ENCODE measurements at regions of chr7 and their contacts with region 1.

Region 1: GRCh38 chr7:135238112-135238744 is 4.6 kb downstream of the STRA8 start:
- DNase-seq: no peak
- ATAC-seq: peak; percentile 30; the same call in 2 of the 3 replicates
- H3K4me3 ChIP-seq: no peak overlapping the region
- H3K27ac ChIP-seq: no peak overlapping the region
- H3K4me1 ChIP-seq: peaks cover 14% of the 10 kb centered on the region
- H3K27me3 ChIP-seq: no peaks in the 10 kb centered on the region
- CTCF ChIP-seq: peak in 2 of 3 experiments; percentile 49 to 56; a peak in 4 of 6 replicates
- EP300 ChIP-seq: no peak
- POLR2A ChIP-seq: no peak
- RAD21 ChIP-seq: no peak

Region 2: GRCh38 chr7:134789967-134790685 is 448.1 kb before region 1 on chr7:
- CTCF ChIA-PET with region 1: no interaction called
- POLR2A ChIA-PET with region 1: no interaction called
- RAD21 ChIA-PET with region 1: no interaction called
- SMC1A ChIA-PET with region 1: no interaction called
- in situ Hi-C with region 1: no loop called
- intact Hi-C with region 1: no loop called
- DNase-seq: no peak
- ATAC-seq: peak; percentile 52; the same call in 2 of the 3 replicates
- H3K4me3 ChIP-seq: no peak overlapping the region
- H3K27ac ChIP-seq: no peak overlapping the region
- H3K4me1 ChIP-seq: no peaks in the 10 kb centered on the region
- H3K27me3 ChIP-seq: no peaks in the 10 kb centered on the region; a peak in 1 of 4 replicates
- CTCF ChIP-seq: no peak
- EP300 ChIP-seq: no peak
- POLR2A ChIP-seq: no peak
- RAD21 ChIP-seq: no peak

Region 3: DNA sequence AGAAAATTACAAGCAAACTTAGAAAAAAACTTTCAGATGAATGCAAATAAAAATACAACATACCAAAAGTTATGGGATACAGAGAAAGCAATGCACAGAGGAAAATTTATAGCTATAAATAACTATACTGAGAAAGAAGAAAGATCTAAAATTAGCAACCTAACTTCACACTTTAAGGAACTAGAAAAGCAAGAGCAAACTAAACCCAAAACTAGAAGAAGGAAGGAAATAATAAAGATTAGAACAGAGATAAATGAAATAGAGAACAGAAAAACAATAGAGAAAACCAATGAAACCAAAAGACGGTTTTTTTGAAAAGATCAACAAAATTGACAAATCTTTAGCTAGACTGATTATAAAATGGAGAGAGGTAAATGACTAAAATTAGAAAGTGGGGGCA is 14.2 kb before region 1 on chr7:
- CTCF ChIA-PET with region 1: interaction called, 18 read pairs
- POLR2A ChIA-PET with region 1: interaction called, 7 read pairs
- RAD21 ChIA-PET with region 1: interaction called, 5 read pairs
- SMC1A ChIA-PET with region 1: interaction called, 26 read pairs
- in situ Hi-C with region 1: no loop called
- intact Hi-C with region 1: no loop called
- DNase-seq: no peak
- ATAC-seq: peak; percentile 55
- H3K4me3 ChIP-seq: no peak overlapping the region; the same call in 1 of the 2 replicates
- H3K27ac ChIP-seq: no peak overlapping the region
- H3K4me1 ChIP-seq: peaks cover 6% of the 10 kb centered on the region; the same call in 1 of the 2 replicates
- H3K27me3 ChIP-seq: no peaks in the 10 kb centered on the region
- CTCF ChIP-seq: no peak
- EP300 ChIP-seq: no peak
- POLR2A ChIP-seq: no peak
- RAD21 ChIP-seq: no peak

Region 4: GRCh38 chr7:135253898-135254771 is 15.9 kb after region 1 on chr7:
- CTCF ChIA-PET with region 1: interaction called, 3 read pairs
- POLR2A ChIA-PET with region 1: interaction called, 30 read pairs
- RAD21 ChIA-PET with region 1: no interaction called
- SMC1A ChIA-PET with region 1: interaction called, 7 read pairs
- in situ Hi-C with region 1: no loop called
- intact Hi-C with region 1: no loop called
- DNase-seq: no peak
- ATAC-seq: no peak
- H3K4me3 ChIP-seq: no peak overlapping the region
- H3K27ac ChIP-seq: no peak overlapping the region
- H3K4me1 ChIP-seq: peaks cover 9% of the 10 kb centered on the region; the same call in 1 of the 2 replicates
- H3K27me3 ChIP-seq: no peaks in the 10 kb centered on the region
- CTCF ChIP-seq: no peak
- EP300 ChIP-seq: no peak
- POLR2A ChIP-seq: no peak
- RAD21 ChIP-seq: no peak